ENCODE measurements at regions of chr20 and their contacts with region 1.

Region 1: GRCh38 chr20:37534401-37535157 is 6.9 kb upstream of the BLCAP start:
- DNase-seq: peak; percentile 88
- H3K4me3 Mint-ChIP-seq: no peak overlapping the region
- H3K27ac Mint-ChIP-seq: no peak overlapping the region
- H3K4me1 Mint-ChIP-seq: peaks cover 6% of the 10 kb centered on the region
- H3K27me3 Mint-ChIP-seq: peaks cover 12% of the 10 kb centered on the region

Region 2: DNA sequence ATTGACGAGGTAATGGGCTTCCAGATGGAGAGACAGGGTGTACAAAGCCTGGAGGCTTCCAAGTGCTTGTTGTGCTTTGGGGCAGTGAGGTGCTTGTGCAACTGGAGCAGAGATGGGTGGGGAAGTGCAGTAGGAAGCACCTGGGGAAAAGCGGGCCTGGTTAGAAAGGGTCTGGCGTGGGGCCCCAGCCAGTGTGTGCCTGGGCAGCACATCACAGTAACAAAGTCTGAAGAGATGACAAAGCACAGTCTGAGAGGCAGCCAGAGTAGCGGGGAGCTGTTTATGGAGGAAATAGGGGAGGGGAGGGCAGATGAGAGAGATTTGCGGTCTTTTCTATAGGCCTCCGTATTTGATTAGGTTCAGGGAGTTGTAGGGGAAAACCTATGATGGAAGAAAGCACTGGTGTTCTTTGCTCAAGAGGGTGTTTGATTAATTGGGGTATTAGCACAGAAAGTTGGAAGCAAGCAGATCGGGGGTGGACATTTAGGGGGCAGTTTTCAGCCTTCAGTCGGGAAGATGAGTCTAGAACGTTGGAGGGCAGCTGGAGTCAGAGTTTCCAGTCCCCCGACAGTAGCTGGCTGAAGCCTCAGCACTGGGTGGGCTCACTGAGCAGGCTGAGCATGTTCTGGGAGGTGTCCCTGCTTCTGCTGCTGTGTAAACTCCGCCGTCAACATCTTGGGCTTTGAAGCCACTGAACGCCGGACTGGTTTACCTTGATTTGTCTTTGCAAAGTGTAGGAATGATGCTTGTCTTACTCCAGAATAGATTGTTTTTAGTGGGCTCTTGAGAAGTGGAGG is 339.8 kb before region 1 on chr20:
- intact Hi-C with region 1: loop called (anchors 1 kb)
- DNase-seq: peak; percentile 75
- H3K4me3 Mint-ChIP-seq: peak overlapping the region; percentile 40
- H3K27ac Mint-ChIP-seq: peak overlapping the region; percentile 61
- H3K4me1 Mint-ChIP-seq: peaks cover 50% of the 10 kb centered on the region
- H3K27me3 Mint-ChIP-seq: no peaks in the 10 kb centered on the region

Region 3: GRCh38 chr20:37270576-37271420 is 263.8 kb before region 1 on chr20:
- intact Hi-C with region 1: loop called (anchors 1 kb)
- DNase-seq: no peak
- H3K4me3 Mint-ChIP-seq: no peak overlapping the region
- H3K27ac Mint-ChIP-seq: no peak overlapping the region
- H3K4me1 Mint-ChIP-seq: peaks cover 4% of the 10 kb centered on the region
- H3K27me3 Mint-ChIP-seq: peaks cover 11% of the 10 kb centered on the region

Region 4: DNA sequence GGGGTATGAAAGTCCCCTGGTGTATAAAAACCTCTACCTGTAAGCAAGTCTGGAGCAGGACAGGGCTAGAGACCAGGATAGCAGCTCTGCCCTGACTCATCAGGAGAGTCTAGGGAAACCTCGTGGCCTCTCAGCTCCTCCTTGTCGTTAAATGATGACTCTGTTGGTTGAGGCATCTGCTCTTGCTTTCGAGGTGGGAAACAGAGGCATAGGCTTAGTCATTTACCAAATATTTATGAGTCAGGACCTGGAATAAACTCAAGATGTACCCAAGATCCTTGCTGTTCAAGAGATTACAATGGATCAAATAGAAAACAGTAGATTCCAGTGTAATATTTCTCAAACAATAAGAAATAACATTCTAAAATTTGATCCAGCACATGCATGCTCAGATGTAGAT is 239.6 kb before region 1 on chr20:
- intact Hi-C with region 1: no loop called
- DNase-seq: no peak
- H3K4me3 Mint-ChIP-seq: no peak overlapping the region
- H3K27ac Mint-ChIP-seq: no peak overlapping the region
- H3K4me1 Mint-ChIP-seq: peaks cover 40% of the 10 kb centered on the region
- H3K27me3 Mint-ChIP-seq: no peaks in the 10 kb centered on the region

Region 5: GRCh38 chr20:37384683-37385174 is 149.8 kb before region 1 on chr20:
- intact Hi-C with region 1: loop called (anchors 2 kb)
- DNase-seq: peak; percentile 96
- H3K4me3 Mint-ChIP-seq: peak overlapping the region; percentile 72
- H3K27ac Mint-ChIP-seq: peak overlapping the region; percentile 85
- H3K4me1 Mint-ChIP-seq: peaks cover 7% of the 10 kb centered on the region
- H3K27me3 Mint-ChIP-seq: peaks cover 7% of the 10 kb centered on the region

Region 6: GRCh38 chr20:37392421-37393178 is 142.0 kb before region 1 on chr20:
- intact Hi-C with region 1: loop called (anchors 1 kb)
- DNase-seq: peak; percentile 76
- H3K4me3 Mint-ChIP-seq: no peak overlapping the region
- H3K27ac Mint-ChIP-seq: no peak overlapping the region
- H3K4me1 Mint-ChIP-seq: no peaks in the 10 kb centered on the region
- H3K27me3 Mint-ChIP-seq: no peaks in the 10 kb centered on the region

Region 7: DNA sequence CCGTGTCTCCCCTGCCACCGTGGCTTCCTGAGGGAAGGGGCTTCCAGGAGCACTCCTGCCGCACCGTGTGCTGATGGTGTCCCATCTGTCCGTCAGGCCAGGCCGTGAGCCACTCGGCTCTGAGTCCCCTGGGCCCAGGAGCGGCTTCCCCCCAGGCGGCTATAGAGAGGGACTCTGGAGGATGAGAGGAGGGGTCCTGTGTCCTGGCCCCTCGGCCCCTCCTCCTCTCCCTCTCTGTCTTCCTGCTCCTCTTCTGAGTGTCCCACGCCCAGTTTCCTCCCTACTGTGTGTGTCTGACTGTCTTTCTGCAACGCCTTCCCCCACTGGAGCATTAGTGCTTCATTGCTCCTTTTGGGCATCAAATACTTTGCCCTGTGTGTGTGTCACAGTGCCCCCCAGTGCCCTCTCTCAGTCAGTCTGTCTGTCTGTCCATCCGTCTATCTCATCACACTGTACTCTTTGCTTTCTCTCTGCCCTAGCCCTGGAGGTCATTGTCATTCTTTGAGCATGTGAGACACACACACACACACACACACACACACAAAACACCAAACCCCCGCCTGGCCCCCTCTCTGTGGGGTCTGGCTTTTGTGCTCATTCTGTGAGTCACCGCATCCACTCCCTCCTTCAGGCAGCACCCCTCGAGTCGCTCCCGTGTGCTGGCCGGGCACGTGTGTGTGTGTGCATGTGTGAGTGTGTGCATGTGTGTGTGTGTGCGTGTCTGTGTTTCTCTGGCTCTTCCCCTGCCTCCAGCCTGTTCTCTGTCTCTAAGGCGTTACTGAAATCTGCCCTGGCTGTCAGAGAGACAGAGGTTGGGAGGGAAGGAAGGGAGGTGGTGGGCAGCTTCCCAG is 116.7 kb before region 1 on chr20:
- intact Hi-C with region 1: no loop called
- DNase-seq: no peak
- H3K4me3 Mint-ChIP-seq: no peak overlapping the region
- H3K27ac Mint-ChIP-seq: no peak overlapping the region
- H3K4me1 Mint-ChIP-seq: peaks cover 2% of the 10 kb centered on the region
- H3K27me3 Mint-ChIP-seq: peaks cover 16% of the 10 kb centered on the region

Measured in activated CD4-positive, alpha-beta T cell treated with anti-CD3 and anti-CD28 coated beads, Interleukin-2, amount 10 ng/mL, durations not matched to agents 24 days and 14 days (primary cell).